Posterior cingulate gyrus (tissue), 11 donors: ENCODE measurements at regions of chr20 and their contacts with region 1.

Region 1: GRCh38 chr20:37178839-37179670 is at the starts of genes MROH8 and RPN2:
- DNase-seq: peak; percentile 98 to 100 (median 99)

Region 2: DNA sequence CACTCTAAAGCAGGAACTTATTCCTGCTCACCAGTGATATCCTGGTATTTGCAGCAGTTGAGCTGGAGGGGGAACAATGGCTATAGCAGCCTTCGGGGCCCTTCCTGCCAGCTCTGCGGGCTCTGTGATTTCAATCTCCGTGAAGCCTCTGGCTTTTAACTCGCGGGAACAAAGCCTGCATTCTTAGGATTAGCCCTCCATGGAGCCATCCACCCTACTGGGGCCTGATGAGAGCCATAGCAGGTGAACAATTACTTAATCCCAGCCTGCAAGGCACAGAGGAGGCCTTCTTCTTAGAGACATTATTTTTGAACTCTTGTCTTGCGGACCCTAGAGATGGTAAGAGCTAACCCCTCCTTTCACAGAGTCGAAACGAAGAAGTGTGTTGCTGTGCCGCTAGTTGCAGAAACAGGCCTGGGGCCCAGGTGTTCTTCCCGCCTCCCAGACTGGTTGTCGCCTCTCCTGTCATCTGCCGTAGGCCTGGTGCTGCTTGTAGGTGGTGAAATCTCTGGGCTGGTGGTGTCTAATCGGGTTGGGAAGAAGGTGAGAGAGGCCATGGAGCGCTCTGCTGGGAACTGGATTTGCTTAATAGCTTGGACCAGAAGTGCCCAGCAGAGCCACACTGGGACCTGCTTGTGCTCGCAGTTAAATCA is 72.9 kb after region 1 on chr20:
- intact Hi-C with region 1: no loop called
- DNase-seq: peak in 1 of 10 donors; percentile 22

Region 3: DNA sequence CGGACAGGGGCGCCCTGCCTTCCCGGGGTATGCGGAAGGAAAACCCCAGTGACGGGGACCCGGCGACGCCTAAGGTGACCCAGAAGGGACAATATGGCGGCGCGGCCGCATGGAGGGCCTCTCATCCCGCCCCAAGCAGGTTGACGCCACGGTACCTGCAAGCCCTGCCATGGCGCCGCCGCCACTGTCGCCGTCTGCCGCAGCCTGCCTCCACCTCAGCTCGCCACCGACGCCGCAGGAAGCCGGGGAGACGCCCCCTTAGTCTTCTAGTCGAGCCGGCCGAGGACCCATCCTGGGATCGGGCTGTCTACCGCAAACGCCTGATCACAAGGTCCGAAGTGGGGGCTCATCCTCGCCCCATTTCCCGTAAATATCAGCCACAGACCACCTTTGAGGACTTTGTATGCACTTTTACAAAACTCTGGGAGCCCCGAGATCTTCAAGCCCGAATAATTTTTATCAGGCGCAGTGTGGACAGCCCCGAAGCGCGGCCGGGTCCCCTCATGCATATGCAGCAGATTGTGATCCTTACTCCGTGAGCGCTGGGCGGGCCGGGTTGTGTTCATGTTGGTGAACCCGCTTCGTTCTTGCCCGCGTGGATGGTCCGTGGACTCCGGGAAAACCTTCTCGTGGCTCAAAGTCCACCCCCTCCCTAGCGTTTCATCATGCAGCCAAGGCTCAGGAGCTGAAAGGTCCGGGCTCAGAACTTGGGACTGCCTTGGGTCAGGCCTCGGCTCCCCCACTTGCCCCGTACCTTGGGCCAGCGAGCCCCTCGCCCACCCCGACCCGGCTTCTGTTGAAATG is 348.8 kb after region 1 on chr20 and contains the start of gene BLCAP:
- intact Hi-C with region 1: loop called (anchors 5 kb)
- DNase-seq: peak; percentile 77 to 98 (median 88)

Region 4: GRCh38 chr20:37693635-37694626 is 514.9 kb after region 1 on chr20 and contains the start of gene CTNNBL1:
- intact Hi-C with region 1: loop called (anchors 5 kb)
- DNase-seq: peak; percentile 94 to 99 (median 96)